ENCODE measurements at regions of chr11 and their contacts with region 1.

Region 1: DNA sequence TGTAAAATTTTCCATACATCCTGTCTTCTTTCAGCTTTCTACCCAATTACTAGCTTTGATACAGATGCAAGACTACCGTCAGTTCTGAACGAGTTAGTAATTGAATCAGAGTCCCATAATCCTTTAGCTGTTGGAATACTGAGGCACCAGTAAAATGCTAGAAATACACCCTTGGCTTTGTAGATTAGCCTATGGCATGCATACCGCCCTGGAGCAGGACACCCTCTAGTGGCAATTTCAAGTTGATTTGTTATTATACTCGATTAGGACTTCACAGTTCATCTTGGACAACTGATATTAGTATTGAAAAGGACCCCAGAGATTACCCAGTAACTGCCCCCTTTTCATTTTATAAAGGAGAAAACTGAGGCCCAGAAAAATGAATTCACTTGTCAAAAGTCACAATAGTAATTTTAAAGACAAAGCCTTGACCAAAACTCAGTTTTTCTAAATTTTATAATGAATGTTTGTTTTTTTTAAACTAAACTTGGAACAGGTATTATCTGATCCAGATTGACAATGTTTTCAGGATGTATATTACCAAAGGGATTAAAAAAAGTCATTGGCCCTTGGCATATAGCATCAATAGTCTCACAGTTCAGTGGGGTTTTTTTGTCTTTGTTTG is 72.6 kb downstream of the HIPK3 start:
- DNase-seq: peak; percentile 53
- H3K4me3 ChIP-seq: no peak overlapping the region
- H3K27ac ChIP-seq: no peak overlapping the region
- H3K4me1 ChIP-seq: no peaks in the 10 kb centered on the region
- H3K27me3 ChIP-seq: no peaks in the 10 kb centered on the region
- CTCF ChIP-seq: peak; percentile 56

Region 2: DNA sequence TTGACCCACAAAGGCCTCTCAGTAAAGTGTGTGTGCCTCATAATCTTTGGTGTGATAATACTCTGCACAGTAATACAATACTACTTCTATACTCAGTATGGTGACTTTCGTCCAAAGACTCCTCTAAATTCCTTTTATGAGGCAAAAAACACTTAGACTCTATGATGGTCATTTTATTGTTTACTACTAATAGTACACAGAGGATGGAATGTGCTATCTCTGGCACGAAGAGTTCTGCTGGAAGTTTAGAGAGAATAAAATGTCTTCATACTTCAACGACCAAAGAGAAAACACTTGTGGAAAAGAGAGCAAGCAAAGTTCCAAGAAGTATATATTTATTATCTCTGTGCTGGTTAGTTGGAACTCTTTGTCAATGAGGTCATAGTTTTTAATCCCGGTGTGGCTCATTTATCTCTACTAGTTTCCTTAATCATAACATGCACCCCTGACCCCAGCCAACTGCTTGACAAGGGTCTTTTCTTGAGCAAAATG is 161.1 kb before region 1 on chr11:
- intact Hi-C with region 1: loop called (anchors 5 kb)
- DNase-seq: no peak
- H3K4me3 ChIP-seq: no peak overlapping the region
- H3K27ac ChIP-seq: no peak overlapping the region
- H3K4me1 ChIP-seq: no peaks in the 10 kb centered on the region
- H3K27me3 ChIP-seq: no peaks in the 10 kb centered on the region
- CTCF ChIP-seq: no peak

Region 3: GRCh38 chr11:33257897-33258630 is 71.8 kb before region 1 on chr11:
- intact Hi-C with region 1: loop called (anchors 5 kb)
- DNase-seq: peak; percentile 81
- H3K4me3 ChIP-seq: peak overlapping the region; percentile 86
- H3K27ac ChIP-seq: peak overlapping the region; percentile 100
- H3K4me1 ChIP-seq: peaks cover 5% of the 10 kb centered on the region
- H3K27me3 ChIP-seq: no peaks in the 10 kb centered on the region
- CTCF ChIP-seq: peak; percentile 20